ENCODE measurements at regions of chrX and their contacts with region 1.

Region 1: DNA sequence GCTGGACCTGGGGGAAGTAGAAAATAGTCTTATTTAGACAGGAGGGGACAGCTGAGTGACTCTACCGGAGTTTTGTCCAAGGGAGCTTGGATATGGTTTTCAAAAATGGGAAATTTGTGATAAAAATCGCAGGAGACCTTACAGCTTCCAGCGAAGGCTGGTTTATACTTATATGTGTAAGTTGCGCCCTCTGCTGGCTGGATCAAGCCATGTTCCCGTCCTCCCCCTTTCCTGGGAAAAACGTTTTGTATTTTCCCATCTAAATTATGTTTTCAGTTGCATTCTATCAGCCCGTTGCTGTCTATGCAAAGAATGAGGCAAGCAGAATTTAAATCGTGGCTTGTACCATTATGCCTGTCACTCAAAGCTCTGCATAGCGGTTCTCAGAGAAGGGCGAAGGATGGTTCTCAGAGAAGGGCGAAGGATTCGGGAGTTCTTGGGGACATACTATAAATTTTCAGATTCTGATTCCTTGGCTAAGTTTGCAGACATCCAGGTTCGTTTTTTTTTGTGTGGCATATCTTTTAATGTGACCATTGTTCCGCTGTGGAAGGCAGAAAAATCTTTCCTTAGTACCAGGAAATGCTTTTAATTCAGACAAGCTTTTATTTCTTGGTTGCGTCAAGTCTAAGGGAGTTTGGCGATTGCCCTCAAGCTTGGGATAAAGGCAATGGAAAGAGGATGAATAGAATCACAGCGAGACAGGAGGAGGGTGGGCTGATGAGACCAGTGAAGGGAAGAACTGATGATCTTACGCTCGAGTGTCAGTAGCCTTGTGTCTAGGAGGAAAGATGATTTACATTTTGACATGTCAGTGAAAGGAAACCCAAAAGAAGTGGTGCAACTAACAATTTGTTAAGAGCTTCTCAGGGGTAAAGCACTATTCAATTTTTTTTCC is 128.5 kb upstream of the ARX start:
- DNase-seq: peak; percentile 42 to 74
- ATAC-seq: peak; percentile 55 to 82 (median 58)
- H3K4me3 ChIP-seq: peak overlapping the region; percentile 40
- H3K27ac ChIP-seq: no peak overlapping the region
- H3K4me1 ChIP-seq: peaks cover 3% of the 10 kb centered on the region
- H3K27me3 ChIP-seq: no peaks in the 10 kb centered on the region
- CTCF ChIP-seq: peak; percentile 85

Region 2: DNA sequence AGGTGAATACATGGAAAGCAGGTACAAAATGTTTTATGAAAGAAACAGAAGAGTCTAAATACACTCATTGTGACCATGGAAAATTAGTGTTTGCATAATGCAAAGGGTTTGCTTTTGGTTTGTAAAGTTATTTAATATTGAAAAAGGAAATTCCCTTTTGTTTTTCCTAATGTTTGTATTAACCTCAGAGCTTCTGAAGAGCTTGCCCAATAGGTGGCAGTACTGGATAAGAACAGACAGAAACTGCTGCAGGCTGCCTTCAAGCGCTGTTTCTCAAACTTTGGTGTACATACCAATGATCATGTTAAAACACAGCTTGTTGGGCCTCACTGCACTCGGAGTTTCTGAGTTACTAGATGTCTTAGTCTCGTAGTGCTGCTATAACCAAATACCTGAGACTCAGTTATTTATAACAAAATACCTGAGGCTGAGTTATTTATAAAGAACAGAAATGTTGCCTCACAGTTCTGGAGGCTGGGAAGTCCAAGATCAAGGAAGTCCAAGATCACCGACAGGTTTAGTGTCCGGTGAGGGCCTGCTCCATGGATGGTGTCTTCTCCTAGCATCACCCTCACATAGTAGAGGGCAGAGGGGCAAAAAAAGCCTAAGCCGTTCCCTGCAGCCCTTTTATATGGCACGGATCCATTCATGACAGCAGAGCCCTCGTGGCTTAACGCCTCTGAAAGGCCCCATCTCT is 884.6 kb before region 1 on chrX:
- intact Hi-C with region 1: no loop called
- DNase-seq: no peak
- ATAC-seq: no peak
- H3K4me3 ChIP-seq: no peak overlapping the region
- H3K27ac ChIP-seq: no peak overlapping the region
- H3K4me1 ChIP-seq: no peaks in the 10 kb centered on the region
- H3K27me3 ChIP-seq: peaks cover 0 to 16% (median 0%) of the 10 kb centered on the region in 3 donors
- CTCF ChIP-seq: peak; percentile 44

Region 3: GRCh38 chrX:24759786-24760185 is 384.5 kb before region 1 on chrX:
- intact Hi-C with region 1: loop called (anchors 5 kb)
- DNase-seq: no peak
- ATAC-seq: no peak
- H3K4me3 ChIP-seq: no peak overlapping the region
- H3K27ac ChIP-seq: peak overlapping the region; percentile 76
- H3K4me1 ChIP-seq: peaks cover 7% of the 10 kb centered on the region
- H3K27me3 ChIP-seq: no peaks in the 10 kb centered on the region
- CTCF ChIP-seq: no peak

Region 4: GRCh38 chrX:24838629-24839028 is 305.7 kb before region 1 on chrX:
- intact Hi-C with region 1: loop called (anchors 2 to 10 kb)
- DNase-seq: no peak
- ATAC-seq: peak in 3 of 4 donors; percentile 67 to 88 (median 72)
- H3K4me3 ChIP-seq: no peak overlapping the region
- H3K27ac ChIP-seq: peak overlapping the region; percentile 60
- H3K4me1 ChIP-seq: peaks cover 6% of the 10 kb centered on the region
- H3K27me3 ChIP-seq: no peaks in the 10 kb centered on the region
- CTCF ChIP-seq: peak; percentile 56

Region 5: DNA sequence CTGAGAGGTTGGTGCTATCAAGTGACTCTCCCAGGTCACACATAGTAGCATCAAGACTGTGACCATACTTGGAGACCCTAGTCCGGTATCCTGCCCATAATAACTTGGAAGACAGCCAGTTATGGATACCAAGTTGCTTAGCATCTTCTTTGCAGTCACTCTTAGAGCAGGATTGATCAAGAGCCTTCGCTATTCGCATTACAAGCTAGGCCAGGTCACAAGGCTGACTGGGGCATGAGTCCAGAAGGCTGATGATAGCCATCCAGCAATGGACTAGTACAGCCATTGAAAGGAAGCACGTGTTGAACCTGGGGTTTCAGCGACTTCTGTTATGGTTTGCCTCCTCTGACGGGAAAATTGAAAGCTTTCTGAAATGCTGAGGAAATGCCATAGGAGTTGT is 293.0 kb before region 1 on chrX:
- intact Hi-C with region 1: no loop called
- DNase-seq: no peak
- ATAC-seq: no peak
- H3K4me3 ChIP-seq: no peak overlapping the region
- H3K27ac ChIP-seq: no peak overlapping the region
- H3K4me1 ChIP-seq: no peaks in the 10 kb centered on the region
- H3K27me3 ChIP-seq: no peaks in the 10 kb centered on the region
- CTCF ChIP-seq: no peak

Region 6: GRCh38 chrX:25015486-25016360 is 128.6 kb before region 1 on chrX and contains the start of gene ARX:
- intact Hi-C with region 1: loop called in 1 of 2 experiments (anchors 5 kb)
- DNase-seq: peak; percentile 68 to 88
- ATAC-seq: peak; percentile 80 to 87 (median 84)
- H3K4me3 ChIP-seq: peak within 1 kb of the TSS; percentile 66
- H3K27ac ChIP-seq: peak within 1 kb of the TSS; percentile 69
- H3K4me1 ChIP-seq: peaks cover 5% of the 10 kb centered on the region
- H3K27me3 ChIP-seq: peaks cover 0 to 94% (median 11%) of the 10 kb centered on the region in 3 donors
- CTCF ChIP-seq: no peak
- total RNA-seq, gene ARX: 2.7 to 12.8 (median 3.9) TPM

Measured in psoas muscle (tissue), 8 donors.